ENCODE measurements at regions of chr1 and their contacts with region 1.

Region 1: DNA sequence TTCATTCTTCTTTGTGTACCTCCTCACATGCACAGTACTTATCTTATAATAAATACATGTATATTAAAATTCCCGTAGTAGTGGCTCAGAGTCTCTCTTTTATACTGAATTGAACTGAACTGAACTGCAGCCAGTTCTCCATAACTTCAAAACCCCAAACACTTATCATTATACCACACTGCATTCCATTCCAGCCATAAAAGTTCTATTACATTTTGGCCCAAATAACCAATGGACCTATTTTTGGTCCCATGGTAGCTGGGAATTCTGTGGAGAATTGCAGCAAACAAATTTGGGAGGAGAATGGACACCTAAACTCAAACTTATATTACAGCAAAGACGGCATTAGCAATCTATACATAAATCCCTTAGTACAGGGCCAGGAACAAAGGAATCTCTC is 86.6 kb upstream of the C1orf87 start:
- DNase-seq: no peak
- ATAC-seq: no peak
- H3K4me3 ChIP-seq: no peak overlapping the region
- H3K27ac ChIP-seq: no peak overlapping the region
- H3K4me1 ChIP-seq: no peaks in the 10 kb centered on the region
- H3K27me3 ChIP-seq: peaks cover 0 to 4% of the 10 kb centered on the region in 2 experiments; a peak in 2 of 5 replicates
- CTCF ChIP-seq: no peak
- EP300 ChIP-seq: no peak
- POLR2A ChIP-seq: no peak
- RAD21 ChIP-seq: no peak

Region 2: DNA sequence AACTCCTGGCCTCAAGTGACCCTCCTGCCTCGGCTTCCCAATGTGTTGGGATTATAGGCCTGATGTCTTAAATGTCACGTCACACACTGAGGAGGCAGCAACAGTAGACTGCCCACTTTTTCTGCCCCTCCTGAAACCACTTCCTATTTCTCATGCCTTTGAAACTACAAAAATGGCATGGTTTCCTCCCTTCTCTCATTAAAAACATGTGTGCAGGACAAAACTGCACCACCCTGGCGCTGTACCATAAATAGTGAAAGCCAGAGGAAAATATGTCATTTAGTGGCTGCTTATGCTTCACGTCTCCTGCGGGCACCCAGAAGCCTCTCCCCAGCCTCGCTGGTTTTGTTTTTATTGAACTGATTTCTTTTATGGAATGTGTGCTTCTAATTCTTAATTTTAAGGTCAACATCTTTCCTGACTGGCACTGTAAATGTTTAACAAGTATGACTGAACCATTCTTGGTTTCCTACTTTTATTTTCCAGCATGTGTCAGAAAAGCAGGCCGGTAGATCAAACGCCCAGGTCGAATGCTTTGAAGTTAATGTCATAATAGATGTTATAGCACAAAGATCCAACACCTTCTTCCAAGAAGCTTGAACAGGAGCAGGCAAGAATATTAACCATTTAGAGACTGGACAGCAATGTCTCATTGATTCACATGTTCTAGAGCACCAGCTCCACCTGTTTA is 27.0 kb before region 1 on chr1:
- CTCF ChIA-PET with region 1: no interaction called
- POLR2A ChIA-PET with region 1: no interaction called
- in situ Hi-C with region 1: no loop called
- intact Hi-C with region 1: no loop called
- DNase-seq: no peak
- ATAC-seq: no peak
- H3K4me3 ChIP-seq: no peak overlapping the region
- H3K27ac ChIP-seq: no peak overlapping the region
- H3K4me1 ChIP-seq: no peaks in the 10 kb centered on the region
- H3K27me3 ChIP-seq: no peaks in the 10 kb centered on the region
- CTCF ChIP-seq: no peak
- EP300 ChIP-seq: no peak
- POLR2A ChIP-seq: no peak
- RAD21 ChIP-seq: no peak

Region 3: GRCh38 chr1:60510162-60510561 is 350.0 kb after region 1 on chr1:
- CTCF ChIA-PET with region 1: no interaction called
- POLR2A ChIA-PET with region 1: no interaction called
- in situ Hi-C with region 1: no loop called
- intact Hi-C with region 1: loop called (anchors 5 kb)
- DNase-seq: no peak
- ATAC-seq: no peak
- H3K4me3 ChIP-seq: no peak overlapping the region
- H3K27ac ChIP-seq: no peak overlapping the region
- H3K4me1 ChIP-seq: no peaks in the 10 kb centered on the region
- H3K27me3 ChIP-seq: no peaks in the 10 kb centered on the region
- CTCF ChIP-seq: no peak
- EP300 ChIP-seq: no peak
- POLR2A ChIP-seq: no peak
- RAD21 ChIP-seq: no peak

Region 4: GRCh38 chr1:60765204-60765603 is 605.1 kb after region 1 on chr1:
- CTCF ChIA-PET with region 1: interaction called, 5 read pairs
- POLR2A ChIA-PET with region 1: no interaction called
- in situ Hi-C with region 1: no loop called
- intact Hi-C with region 1: loop called (anchors 1 kb)
- DNase-seq: peak; percentile 46
- ATAC-seq: peak; percentile 89
- H3K4me3 ChIP-seq: no peak overlapping the region
- H3K27ac ChIP-seq: no peak overlapping the region
- H3K4me1 ChIP-seq: no peaks in the 10 kb centered on the region
- H3K27me3 ChIP-seq: no peaks in the 10 kb centered on the region
- CTCF ChIP-seq: peak; percentile 79
- EP300 ChIP-seq: no peak
- POLR2A ChIP-seq: no peak
- RAD21 ChIP-seq: no peak

Region 5: DNA sequence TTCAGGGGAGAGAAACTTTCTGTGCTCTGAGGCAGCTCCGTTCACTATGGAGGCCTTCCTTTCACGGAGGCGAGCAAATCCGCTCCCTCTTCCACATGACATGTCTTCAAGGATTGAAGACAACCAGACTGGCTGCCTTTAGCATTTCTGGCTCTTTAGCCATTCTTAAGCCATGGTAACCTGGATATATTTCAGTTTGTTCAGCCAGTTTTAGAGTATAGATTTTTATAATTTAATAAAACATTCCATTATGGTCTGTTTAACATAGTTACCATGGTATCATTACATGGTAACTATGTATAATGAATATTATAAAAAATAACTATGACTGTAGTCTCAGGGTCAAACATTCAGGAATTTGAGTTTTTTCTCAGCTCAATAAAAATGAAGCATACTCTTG is 868.0 kb after region 1 on chr1:
- CTCF ChIA-PET with region 1: no interaction called
- POLR2A ChIA-PET with region 1: no interaction called
- in situ Hi-C with region 1: no loop called
- intact Hi-C with region 1: loop called (anchors 5 kb)
- DNase-seq: no peak
- ATAC-seq: no peak
- H3K4me3 ChIP-seq: no peak overlapping the region
- H3K27ac ChIP-seq: no peak overlapping the region
- H3K4me1 ChIP-seq: no peaks in the 10 kb centered on the region
- H3K27me3 ChIP-seq: peaks cover 0 to 7% of the 10 kb centered on the region in 2 experiments; a peak in 3 of 5 replicates
- CTCF ChIP-seq: no peak
- EP300 ChIP-seq: no peak
- POLR2A ChIP-seq: no peak
- RAD21 ChIP-seq: no peak

Measured in HepG2 (cell line).